ENCODE measurements at regions of chr16 and their contacts with region 1.

Region 1: GRCh38 chr16:77675464-77676324 is 46.6 kb upstream of the NUDT7 start:
- DNase-seq: peak in 41 of 42 donors; percentile 11 to 91 (median 74)

Region 2: DNA sequence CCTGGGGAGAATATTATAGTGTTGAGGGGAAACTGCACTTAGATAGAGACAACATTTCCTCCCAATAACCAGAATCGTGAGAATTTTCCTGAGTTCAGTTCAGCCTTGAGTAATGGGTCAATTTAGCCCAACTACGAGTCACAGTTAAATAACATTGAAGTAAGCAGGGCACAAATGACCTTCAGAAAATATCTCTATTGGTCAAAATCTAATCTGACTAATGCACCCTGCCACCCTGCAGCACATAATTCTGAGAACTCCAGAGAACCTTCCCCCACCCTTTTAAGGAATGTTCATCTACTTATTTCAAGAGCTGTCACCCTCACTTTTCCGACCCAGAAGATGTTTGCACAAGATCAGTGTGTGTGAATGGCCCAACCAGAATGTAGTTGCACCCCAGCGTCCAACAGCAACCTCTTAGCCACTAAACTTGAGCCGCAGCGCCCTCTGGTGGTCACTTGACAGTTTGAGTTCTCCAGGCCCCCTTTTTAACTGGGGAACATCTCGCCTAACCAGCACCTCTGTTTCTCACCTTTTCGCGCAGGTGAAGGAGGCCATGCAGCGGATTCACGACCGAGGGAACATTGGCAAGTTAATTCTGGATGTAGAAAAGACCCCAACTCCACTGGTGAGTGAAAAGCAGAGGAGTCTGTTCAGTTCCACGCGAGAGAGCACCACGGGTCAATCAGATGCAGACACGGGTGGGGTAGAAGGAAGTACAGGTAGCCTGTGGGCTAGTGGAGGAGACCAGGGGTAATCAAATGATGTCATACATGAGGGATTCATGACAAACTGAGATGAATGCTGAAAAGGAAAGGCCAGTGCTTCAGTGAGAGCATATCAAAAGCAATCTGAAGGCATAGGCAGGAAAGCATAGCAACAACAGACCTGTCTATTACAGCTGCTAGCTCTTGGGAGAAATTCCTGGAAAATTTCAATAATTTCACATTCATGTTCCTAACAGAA is 295.9 kb after region 1 on chr16:
- intact Hi-C with region 1: loop called (anchors 2 kb)
- DNase-seq: peak; percentile 74 to 96 (median 88)

Region 3: GRCh38 chr16:78099372-78100161 is 423.9 kb after region 1 on chr16 and contains the start of gene WWOX:
- intact Hi-C with region 1: loop called (anchors 10 kb)
- DNase-seq: peak; percentile 90 to 98 (median 96)

Measured in head of caudate nucleus (tissue), 42 donors.